Sciatic nerve (tissue), 2 donors: ENCODE measurements at regions of chr7 and their contacts with region 1.

Region 1: GRCh38 chr7:64618785-64619456 is 47.0 kb upstream of the ZNF107 start:
- DNase-seq: no peak
- ATAC-seq: no peak

Region 2: GRCh38 chr7:64183126-64183742 is 435.7 kb before region 1 on chr7:
- intact Hi-C with region 1: loop called (anchors 5 kb)
- DNase-seq: no peak
- ATAC-seq: peak; percentile 20

Region 3: GRCh38 chr7:64665980-64666662 is 47.2 kb after region 1 on chr7 and contains the start of gene ZNF107:
- intact Hi-C with region 1: no loop called
- DNase-seq: peak; percentile 94
- ATAC-seq: peak; percentile 100
- total RNA-seq, gene ZNF107: 7.7 TPM